Common myeloid progenitor, CD34-positive (primary cell): ENCODE measurements at regions of chr3 and their contacts with region 1.

Region 1: DNA sequence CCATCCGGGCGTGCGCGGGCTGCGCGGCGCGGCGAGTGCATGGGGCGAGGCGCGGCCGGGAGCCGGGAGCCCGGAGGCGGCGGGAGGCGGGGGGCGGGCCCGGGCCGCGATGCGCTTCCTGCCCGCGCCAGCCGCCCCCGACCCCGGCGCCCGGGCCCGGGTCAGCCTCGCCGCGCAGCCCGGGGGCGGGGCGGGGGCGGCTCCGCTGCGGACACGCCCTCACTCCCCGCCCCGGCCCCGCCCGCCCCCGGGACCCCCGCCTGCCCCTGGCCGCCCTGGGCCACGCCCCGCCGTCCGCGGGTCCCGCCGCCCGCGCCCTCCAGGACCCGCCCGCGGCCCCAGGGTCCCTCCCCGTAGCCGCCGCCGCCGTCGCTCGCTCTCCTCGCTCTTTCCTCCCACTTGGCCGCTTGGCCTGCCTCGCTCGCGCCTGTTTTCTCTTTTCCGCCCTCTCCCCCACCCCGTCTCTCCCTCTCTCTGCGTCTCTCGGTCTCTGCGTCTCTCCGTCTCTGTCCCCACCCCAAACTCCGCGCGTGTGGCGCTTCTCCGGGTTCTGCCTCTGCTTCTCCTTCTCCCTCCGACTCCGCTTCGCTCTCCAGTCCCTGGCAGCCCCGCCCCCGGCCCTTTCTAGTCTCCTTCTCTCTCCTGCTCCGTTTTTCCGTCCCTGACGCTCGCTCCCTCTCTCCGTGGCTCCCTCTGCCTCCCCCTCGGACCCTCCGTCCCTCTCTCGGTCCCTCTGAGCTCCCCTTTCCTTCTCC is at the start of gene PLXND1:
- DNase-seq: peak in 2 of 3 donors; percentile 55 to 65
- H3K4me3 ChIP-seq: peak within 1 kb of the TSS; percentile 52 to 82 (median 73)
- H3K27ac ChIP-seq: peak within 1 kb of the TSS in 1 of 2 experiments; percentile 25
- H3K4me1 ChIP-seq: peaks cover 0 to 84% (median 70%) of the 10 kb centered on the region in 4 experiments
- H3K27me3 ChIP-seq: no peaks in the 10 kb centered on the region

Region 2: DNA sequence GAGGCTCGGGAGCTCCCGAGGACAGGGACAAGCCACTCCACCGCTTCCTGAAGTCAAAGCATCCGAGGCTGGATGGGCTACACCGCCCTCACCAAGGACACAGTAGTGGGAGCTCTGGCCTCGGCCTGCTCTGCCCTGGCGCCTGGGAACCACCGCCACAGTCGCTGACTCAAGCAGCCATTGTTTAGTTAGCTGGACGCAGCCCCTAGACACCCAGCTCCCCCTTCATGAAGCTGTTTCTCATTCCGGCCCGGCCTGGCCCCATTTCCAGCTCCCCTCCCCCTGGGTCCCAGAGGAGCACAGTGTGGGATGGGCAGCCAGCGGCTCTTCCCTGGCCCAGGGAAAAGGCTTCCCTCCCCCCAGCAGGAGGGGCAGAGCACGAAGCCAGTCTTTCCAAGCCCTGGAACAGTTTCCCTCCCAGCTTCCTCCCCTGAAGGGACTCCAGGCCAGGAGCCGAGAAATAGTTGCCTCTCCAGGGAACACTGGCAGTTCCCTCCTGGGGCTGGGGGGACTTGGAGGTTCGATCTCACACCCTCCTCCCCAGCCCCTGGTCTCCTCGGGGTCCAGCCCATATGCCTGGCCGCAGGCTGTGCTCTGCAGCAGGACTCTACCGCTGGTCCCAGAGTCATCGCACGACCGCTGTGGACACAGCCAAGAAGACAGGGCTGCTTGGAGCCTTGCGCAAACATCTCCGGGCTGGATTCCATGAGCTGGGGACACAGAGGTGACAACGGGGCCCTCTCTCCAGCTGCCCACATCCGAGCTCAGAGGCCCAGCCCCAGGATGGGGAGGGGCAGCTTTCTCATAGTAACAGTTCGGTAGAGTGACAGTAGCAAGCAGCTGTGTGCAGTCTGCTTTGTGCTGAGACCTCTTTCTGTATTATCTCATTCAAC is 10.4 kb before region 1 on chr3:
- CTCF ChIA-PET with region 1: interaction called, 44 read pairs
- POLR2A ChIA-PET with region 1: interaction called, 4 read pairs
- DNase-seq: peak; percentile 47 to 84 (median 72)
- H3K4me3 ChIP-seq: peak overlapping the region in 3 of 7 experiments; percentile 15 to 40 (median 37)
- H3K27ac ChIP-seq: peak overlapping the region in 1 of 2 experiments; percentile 14
- H3K4me1 ChIP-seq: peaks cover 6 to 100% (median 95%) of the 10 kb centered on the region in 4 experiments
- H3K27me3 ChIP-seq: no peaks in the 10 kb centered on the region

Region 3: DNA sequence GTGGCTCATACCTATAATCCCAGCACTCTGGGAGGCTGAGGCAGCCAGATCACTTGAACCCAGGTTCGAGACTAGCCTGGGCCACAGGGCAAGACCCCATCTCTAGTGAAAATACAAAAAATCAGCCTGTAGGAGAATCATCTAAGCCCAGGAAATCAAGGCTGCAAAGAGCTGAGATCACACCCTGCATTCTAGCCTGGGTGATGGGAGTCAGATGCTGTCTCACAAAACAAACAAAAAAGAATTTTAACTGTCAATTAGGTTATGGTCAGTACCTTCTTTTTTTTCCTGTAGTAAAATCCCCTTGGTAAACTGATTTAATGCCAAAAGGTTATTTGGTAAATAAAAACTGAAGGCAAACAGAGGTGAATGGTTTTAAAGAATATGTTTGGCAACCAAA is 257.7 kb after region 1 on chr3:
- CTCF ChIA-PET with region 1: no interaction called
- POLR2A ChIA-PET with region 1: no interaction called
- DNase-seq: no peak
- H3K4me3 ChIP-seq: no peak overlapping the region
- H3K27ac ChIP-seq: no peak overlapping the region
- H3K4me1 ChIP-seq: no peaks in the 10 kb centered on the region
- H3K27me3 ChIP-seq: no peaks in the 10 kb centered on the region